Activated CD4-positive, alpha-beta T cell treated with anti-CD3 and anti-CD28 coated beads for 36 hours (primary cell): ENCODE measurements at regions of chr11 and their contacts with region 1.

Region 1: GRCh38 chr11:57567515-57568329 is at the start of gene UBE2L6:
- DNase-seq: peak; percentile 95
- ATAC-seq: peak; percentile 80
- H3K4me3 Mint-ChIP-seq: peak within 1 kb of the TSS; percentile 89
- H3K27ac Mint-ChIP-seq: peak within 1 kb of the TSS; percentile 98
- H3K4me1 Mint-ChIP-seq: peaks cover 29% of the 10 kb centered on the region
- H3K27me3 Mint-ChIP-seq: no peaks in the 10 kb centered on the region
- total RNA-seq, gene UBE2L6: 179 to 252 TPM

Region 2: DNA sequence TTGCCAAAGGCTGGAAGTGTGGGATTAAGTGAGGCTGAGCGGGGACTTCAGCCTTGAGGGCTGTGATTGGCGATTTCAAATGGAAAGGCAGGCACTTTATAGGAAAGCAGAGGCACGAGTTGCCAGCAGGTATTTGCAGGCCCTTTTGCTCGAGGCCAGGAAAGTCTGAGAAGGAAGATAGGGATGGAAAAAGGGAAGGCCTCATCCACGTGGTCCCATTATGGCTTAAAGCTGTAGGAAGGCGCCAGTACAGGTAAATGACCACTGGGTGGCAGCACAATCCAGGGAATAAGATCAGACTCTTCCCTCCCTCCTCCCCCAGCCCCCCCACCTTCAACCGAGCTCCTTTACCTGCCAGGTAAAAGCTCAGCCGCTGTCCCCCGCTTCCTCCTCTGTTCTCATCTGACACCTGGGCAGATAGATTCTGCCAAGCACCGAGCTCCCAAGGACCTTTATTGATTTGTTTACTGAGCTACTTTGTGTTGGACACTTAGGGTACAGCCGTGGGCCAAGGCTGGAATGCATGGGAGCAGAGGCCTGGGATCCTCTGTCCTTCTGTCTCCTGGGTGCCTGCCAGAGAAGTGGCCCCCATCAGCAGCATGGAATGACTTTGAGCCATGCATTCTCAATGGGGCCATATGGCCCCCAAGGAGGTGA is 222.0 kb before region 1 on chr11:
- CTCF ChIA-PET with region 1: interaction called, 5 read pairs
- POLR2A ChIA-PET with region 1: no interaction called
- intact Hi-C with region 1: loop called in 1 of 2 experiments (anchors 2 kb)
- DNase-seq: peak; percentile 84
- ATAC-seq: peak; percentile 87
- H3K4me3 Mint-ChIP-seq: no peak overlapping the region
- H3K27ac Mint-ChIP-seq: peak overlapping the region; percentile 52
- H3K4me1 Mint-ChIP-seq: peaks cover 5% of the 10 kb centered on the region
- H3K27me3 Mint-ChIP-seq: no peaks in the 10 kb centered on the region

Region 3: DNA sequence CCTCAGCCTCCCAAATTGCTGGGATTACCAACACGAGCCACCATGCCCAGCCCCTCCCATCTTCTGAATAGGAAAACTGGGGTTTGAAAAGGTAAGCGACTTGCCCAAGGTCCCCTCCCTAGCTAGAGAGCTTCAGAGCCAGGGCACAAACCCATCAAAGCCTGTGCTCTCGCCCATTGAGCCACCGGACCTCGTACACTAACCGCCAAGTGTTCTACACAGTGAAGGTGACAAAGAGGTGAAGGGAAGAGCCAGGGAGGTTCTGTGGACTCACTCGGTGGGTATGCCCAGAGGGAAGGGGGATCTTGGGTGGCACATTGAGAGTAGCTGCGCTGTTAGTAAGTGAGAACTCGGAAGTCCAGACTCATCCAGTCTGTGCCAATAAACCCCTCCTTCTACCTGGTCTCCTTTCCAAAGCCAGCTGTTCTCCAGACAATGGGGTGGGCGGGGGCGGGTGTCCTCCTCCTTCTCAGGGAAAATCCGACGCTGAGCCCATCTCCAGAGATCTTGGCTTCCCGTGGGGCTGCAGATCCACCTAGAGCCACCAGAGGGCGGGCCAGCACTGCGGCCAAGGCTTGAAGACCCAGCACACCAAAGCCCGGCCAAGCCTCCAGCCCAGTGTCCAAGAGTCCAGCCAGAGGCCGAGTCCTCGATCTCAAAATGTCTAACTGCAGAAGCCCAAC is 110.6 kb before region 1 on chr11:
- CTCF ChIA-PET with region 1: interaction called, 3 read pairs
- POLR2A ChIA-PET with region 1: interaction called, 4 read pairs
- intact Hi-C with region 1: loop called (anchors 1 to 2 kb)
- DNase-seq: peak; percentile 87
- ATAC-seq: peak; percentile 36
- H3K4me3 Mint-ChIP-seq: peak overlapping the region; percentile 15
- H3K27ac Mint-ChIP-seq: no peak overlapping the region
- H3K4me1 Mint-ChIP-seq: peaks cover 27% of the 10 kb centered on the region
- H3K27me3 Mint-ChIP-seq: peaks cover 25% of the 10 kb centered on the region

Region 4: GRCh38 chr11:57644748-57645688 is 77.3 kb after region 1 on chr11:
- CTCF ChIA-PET with region 1: interaction called, 118 read pairs
- POLR2A ChIA-PET with region 1: interaction called, 4 read pairs
- intact Hi-C with region 1: loop called (anchors 1 kb)
- DNase-seq: peak; percentile 93
- ATAC-seq: peak; percentile 79
- H3K4me3 Mint-ChIP-seq: no peak overlapping the region
- H3K27ac Mint-ChIP-seq: no peak overlapping the region
- H3K4me1 Mint-ChIP-seq: peaks cover 33% of the 10 kb centered on the region
- H3K27me3 Mint-ChIP-seq: peaks cover 47% of the 10 kb centered on the region

Region 5: GRCh38 chr11:57667736-57668435 is 100.2 kb after region 1 on chr11 and contains the start of gene ZDHHC5:
- CTCF ChIA-PET with region 1: interaction called, 6 read pairs
- POLR2A ChIA-PET with region 1: interaction called, 4 read pairs
- intact Hi-C with region 1: loop called (anchors 1 kb)
- DNase-seq: peak; percentile 100
- ATAC-seq: peak; percentile 88
- H3K4me3 Mint-ChIP-seq: peak within 1 kb of the TSS; percentile 99
- H3K27ac Mint-ChIP-seq: peak within 1 kb of the TSS; percentile 99
- H3K4me1 Mint-ChIP-seq: peaks cover 37% of the 10 kb centered on the region
- H3K27me3 Mint-ChIP-seq: no peaks in the 10 kb centered on the region
- total RNA-seq, gene ZDHHC5: 46.2 to 60.0 TPM

Region 6: GRCh38 chr11:57741132-57742086 is 173.7 kb after region 1 on chr11 and contains the start of gene SELENOH:
- CTCF ChIA-PET with region 1: interaction called, 5 read pairs
- POLR2A ChIA-PET with region 1: interaction called, 4 read pairs
- intact Hi-C with region 1: loop called (anchors 1 to 2 kb)
- DNase-seq: peak; percentile 98
- ATAC-seq: peak; percentile 94
- H3K4me3 Mint-ChIP-seq: peak within 1 kb of the TSS; percentile 98
- H3K27ac Mint-ChIP-seq: peak within 1 kb of the TSS; percentile 100
- H3K4me1 Mint-ChIP-seq: peaks cover 28% of the 10 kb centered on the region
- H3K27me3 Mint-ChIP-seq: no peaks in the 10 kb centered on the region
- total RNA-seq, gene SELENOH: 117 to 244 TPM

Region 7: DNA sequence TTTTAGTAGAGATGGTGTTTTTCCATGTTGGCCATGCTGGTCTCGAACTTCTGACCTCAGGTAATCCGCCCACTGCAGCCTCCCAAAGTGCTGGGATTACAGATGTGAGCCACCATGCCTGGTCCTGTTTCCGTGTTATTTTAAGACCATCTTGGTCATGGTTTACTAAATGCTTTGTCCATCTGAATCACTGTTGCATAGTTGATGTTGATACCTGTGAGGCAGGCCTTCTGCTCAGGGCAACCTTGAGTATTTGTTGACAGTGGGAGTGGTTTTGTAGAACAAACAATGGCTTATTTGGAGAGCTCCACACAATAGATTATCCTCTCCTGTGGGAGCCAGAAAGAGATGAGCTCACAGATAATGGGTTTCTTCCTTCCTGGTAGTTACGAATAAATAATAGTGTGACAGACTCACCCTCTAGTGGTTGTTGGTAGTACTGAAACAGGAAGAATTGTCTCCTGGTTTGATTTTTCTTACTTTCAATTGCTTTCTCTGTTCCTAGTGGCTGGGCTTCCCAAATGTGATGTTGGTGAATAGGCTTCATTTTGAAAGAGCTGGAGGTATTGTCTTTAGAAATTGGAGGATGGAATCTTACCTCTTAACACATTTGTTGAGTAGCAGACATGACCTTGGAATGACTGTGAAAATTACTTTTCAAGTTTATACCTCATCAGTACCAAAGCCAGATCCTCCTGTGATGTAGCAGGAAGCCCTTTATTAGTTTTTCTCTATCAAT is 232.9 kb after region 1 on chr11:
- CTCF ChIA-PET with region 1: interaction called, 18 read pairs
- POLR2A ChIA-PET with region 1: no interaction called
- intact Hi-C with region 1: loop called (anchors 1 kb)
- DNase-seq: no peak
- ATAC-seq: peak; percentile 91
- H3K4me3 Mint-ChIP-seq: no peak overlapping the region
- H3K27ac Mint-ChIP-seq: peak overlapping the region; percentile 59
- H3K4me1 Mint-ChIP-seq: peaks cover 27% of the 10 kb centered on the region
- H3K27me3 Mint-ChIP-seq: no peaks in the 10 kb centered on the region